ENCODE measurements at regions of chr11 and their contacts with region 1.

Region 1: GRCh38 chr11:118928108-118928870 is 2.6 kb upstream of the BCL9L start:
- DNase-seq: peak; percentile 97
- H3K4me3 Mint-ChIP-seq: peak overlapping the region; percentile 97
- H3K27ac Mint-ChIP-seq: peak overlapping the region; percentile 98
- H3K4me1 Mint-ChIP-seq: peaks cover 51% of the 10 kb centered on the region
- H3K27me3 Mint-ChIP-seq: no peaks in the 10 kb centered on the region

Region 2: DNA sequence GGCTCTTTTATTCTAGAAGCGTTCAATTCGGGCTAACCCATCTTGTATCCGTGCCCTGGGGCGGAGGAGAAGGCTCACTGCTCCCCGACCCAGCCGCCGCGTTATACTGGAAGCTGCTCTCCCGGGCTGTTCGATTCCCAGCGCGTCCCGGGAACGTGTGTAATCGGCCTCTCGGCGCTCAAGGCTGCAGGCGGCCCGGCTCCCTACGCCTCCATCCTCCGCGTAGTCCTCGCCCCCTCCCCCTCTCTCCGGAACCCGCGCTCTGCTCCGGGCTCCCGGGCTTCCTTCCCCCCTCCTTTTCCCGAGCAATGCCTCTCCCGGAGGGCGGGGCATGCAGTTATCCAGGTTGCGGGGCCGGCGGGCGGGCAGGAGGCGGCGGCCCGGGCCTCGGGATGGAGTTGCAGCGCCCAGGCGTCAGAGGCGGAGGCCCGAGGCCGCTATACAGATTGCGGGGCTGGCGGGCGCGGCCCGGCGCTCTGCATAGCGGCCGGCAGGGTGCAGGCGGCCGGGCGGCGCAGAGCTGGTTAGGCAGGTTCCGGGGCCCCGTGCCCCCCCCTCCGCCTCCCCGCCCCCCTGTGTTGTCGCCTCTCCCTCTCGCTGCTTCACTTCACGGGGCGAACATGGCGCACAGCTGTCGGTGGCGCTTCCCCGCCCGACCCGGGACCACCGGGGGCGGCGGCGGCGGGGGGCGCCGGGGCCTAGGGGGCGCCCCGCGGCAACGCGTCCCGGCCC is 492.2 kb before region 1 on chr11 and contains the start of gene KMT2A:
- intact Hi-C with region 1: no loop called
- DNase-seq: peak; percentile 98
- H3K4me3 Mint-ChIP-seq: peak within 1 kb of the TSS; percentile 97
- H3K27ac Mint-ChIP-seq: peak within 1 kb of the TSS; percentile 92
- H3K4me1 Mint-ChIP-seq: peaks cover 37% of the 10 kb centered on the region
- H3K27me3 Mint-ChIP-seq: peaks cover 2% of the 10 kb centered on the region
- total RNA-seq, gene KMT2A: 70.7 and 73.2 TPM in 2 replicates

Region 3: DNA sequence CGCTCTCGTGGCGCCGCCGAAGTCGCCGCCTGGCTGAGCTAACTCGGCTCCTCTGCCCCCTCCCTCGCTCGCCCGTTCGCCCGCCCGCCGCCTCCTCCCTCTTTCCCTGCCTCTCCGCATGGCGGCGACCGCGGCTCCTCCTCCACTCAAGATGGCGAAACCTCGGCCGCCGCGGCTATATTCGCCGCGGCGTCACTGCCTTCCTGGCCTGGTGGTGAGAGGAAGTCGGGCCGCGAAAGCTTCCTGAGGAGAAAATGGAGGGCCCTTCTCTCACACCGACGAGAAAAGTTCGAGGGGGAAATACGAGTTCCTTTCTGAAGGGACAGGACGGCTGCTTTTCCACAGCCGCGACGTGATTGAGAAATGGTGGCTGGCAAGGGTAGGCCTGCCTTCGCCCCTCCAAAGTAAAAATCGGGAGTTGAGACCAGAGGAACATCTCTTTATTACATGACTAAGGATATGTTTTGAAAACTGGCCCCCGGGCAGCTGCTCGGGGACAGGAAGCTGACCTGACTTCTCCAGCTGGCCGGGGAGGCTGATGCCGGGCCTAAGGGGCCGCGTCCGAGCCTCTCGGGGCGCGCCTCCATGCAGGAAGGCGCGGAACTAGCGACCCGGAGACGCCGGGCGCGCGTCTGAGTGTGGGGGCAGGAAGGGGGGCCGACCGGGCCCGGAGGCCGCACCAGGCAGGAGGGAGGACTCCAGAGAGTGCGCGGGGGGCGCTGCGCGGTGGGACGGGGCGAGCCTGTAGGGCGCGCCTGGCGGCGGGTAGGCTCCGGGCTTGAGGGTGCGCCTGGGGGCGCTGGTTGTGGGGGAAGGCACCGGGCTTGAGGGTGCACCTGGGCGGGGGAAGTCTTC is 137.0 kb before region 1 on chr11 and contains the start of gene DDX6:
- intact Hi-C with region 1: loop called (anchors 1 kb)
- DNase-seq: peak; percentile 97
- H3K4me3 Mint-ChIP-seq: peak within 1 kb of the TSS; percentile 96
- H3K27ac Mint-ChIP-seq: peak within 1 kb of the TSS; percentile 96
- H3K4me1 Mint-ChIP-seq: peaks cover 27% of the 10 kb centered on the region
- H3K27me3 Mint-ChIP-seq: no peaks in the 10 kb centered on the region
- total RNA-seq, gene DDX6: 117 TPM in 2 replicates

Region 4: DNA sequence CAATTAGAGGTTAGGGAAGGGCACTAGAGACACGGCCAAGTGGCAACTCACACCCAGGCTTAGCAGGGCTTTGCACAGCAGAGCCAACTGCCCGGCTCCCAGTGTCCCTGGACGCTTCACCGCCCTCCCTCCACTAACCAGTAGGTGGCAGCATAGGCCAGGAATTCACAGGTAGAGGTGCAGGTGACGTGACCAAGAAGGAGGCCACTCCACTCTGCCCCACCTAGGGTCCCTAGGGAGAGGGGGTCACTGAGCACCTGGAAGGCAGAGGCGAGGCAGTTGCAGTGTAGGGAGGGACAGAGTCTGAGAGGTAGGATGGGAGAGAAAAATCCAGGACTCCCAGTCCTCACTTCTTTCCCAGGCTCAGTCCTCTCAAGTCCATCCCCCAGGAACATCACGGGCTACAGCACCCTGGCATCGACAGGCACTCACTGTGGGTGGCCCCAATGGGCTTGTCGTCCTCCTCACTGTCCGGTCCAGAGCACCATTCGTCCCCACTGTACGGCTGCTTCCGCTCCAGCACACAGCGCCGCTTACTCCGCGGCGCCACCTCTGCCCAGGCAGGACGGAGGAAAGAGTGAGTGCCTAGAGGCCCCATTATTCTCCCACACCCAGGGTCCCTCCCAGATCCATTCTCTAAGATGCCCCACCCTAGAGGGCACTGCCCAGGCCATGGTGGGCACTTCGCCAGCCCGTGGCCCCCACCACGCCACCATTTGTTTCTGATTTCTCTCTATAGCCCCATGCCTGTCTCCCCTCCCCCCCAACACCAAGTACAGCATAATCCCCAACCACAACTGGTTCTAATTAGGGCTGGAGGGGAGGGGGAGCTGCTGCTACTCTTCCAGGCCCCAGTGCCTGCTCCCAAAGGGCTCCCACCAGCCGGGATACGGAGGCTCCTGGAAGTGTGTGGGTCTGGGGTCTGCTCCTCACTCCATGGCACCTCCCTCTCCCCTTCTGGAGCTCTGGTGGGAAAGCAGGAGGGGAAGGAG is 20.9 kb before region 1 on chr11:
- intact Hi-C with region 1: loop called (anchors 1 kb)
- DNase-seq: peak; percentile 97
- H3K4me3 Mint-ChIP-seq: no peak overlapping the region
- H3K27ac Mint-ChIP-seq: peak overlapping the region; percentile 27
- H3K4me1 Mint-ChIP-seq: peaks cover 35% of the 10 kb centered on the region
- H3K27me3 Mint-ChIP-seq: no peaks in the 10 kb centered on the region

Region 5: DNA sequence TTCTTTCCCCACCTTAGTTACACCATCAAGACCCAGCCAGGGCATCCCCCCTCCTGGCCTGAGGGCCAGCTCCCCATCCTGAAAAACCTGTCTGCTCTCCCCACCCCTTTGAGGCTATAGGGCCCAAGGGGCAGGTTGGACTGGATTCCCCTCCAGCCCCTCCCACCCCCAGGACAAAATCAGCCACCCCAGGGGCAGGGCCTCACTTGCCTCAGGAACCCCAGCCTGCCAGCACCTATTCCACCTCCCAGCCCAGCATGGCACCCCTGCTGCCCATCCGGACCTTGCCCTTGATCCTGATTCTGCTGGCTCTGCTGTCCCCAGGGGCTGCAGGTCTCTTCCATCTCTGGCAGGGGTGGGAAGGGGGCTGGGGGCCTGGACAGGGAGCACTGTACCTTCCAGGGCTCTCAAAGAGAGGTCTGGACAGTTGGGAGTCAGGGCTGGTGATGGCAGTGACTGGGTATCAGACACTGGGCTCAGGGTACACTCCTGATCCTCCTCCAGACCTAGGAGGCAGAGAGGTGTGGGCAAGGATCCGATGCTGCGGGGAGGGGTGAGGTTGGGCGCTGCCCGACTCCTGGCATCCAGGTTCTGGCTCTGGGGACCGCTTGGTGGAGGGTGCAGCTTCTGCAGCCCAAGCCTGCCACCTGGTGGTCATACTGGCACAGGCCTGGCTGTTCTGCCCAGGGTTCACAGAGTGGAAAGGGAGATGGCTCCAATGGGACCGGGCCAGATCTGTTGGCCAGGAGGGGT is 28.0 kb after region 1 on chr11 and contains the start of gene UPK2:
- intact Hi-C with region 1: loop called (anchors 1 kb)
- DNase-seq: peak; percentile 96
- H3K4me3 Mint-ChIP-seq: no peak within 1 kb of the TSS
- H3K27ac Mint-ChIP-seq: no peak within 1 kb of the TSS
- H3K4me1 Mint-ChIP-seq: peaks cover 4% of the 10 kb centered on the region
- H3K27me3 Mint-ChIP-seq: peaks cover 26% of the 10 kb centered on the region
- total RNA-seq, gene UPK2: not detected in 2 replicates

Region 6: GRCh38 chr11:119018074-119018938 is 90.0 kb after region 1 on chr11 and contains the starts of genes RPS25 and TRAPPC4:
- intact Hi-C with region 1: loop called (anchors 5 kb)
- DNase-seq: peak; percentile 98
- H3K4me3 Mint-ChIP-seq: peak within 1 kb of the TSS; percentile 100
- H3K27ac Mint-ChIP-seq: peak within 1 kb of the TSS; percentile 99
- H3K4me1 Mint-ChIP-seq: peaks cover 35% of the 10 kb centered on the region
- H3K27me3 Mint-ChIP-seq: no peaks in the 10 kb centered on the region
- total RNA-seq, gene RPS25: 1,641 and 1,650 TPM in 2 replicates
- total RNA-seq, gene TRAPPC4: 141 and 151 TPM in 2 replicates